Aorta (tissue), 5 donors: ENCODE measurements at regions of chr7 and their contacts with region 1.

Region 1: DNA sequence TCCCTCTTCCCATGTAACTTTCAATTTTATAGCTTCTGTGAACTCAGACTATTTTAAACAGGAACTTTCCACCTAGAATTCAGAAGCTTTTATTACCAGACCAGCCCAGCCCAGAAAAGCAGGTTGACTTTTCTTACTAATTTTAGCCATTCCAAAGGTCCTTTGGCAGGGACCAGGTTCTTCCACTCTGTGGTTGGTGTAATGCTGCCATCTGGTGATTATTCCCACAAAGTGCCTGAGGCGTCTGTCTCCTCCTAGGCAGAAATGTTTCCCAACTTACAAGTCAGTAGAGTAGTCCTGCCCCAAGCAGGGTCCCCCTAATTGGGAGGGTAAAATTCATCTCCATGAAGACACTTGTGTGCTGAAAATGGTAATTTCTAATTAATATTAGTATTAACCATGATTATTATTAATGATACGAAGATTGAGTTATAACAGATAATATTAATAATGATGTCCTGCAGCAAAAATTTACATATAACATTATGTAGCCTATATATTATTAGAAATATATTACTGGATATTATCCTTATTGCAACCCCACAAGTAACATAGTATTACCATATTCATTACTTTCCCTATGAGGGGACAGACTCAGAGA is 53.0 kb upstream of the PPP1R17 start:
- DNase-seq: no peak
- ATAC-seq: peak; percentile 82
- H3K4me3 ChIP-seq: no peak overlapping the region
- H3K27ac ChIP-seq: no peak overlapping the region
- H3K4me1 ChIP-seq: no peaks in the 10 kb centered on the region
- H3K27me3 ChIP-seq: no peaks in the 10 kb centered on the region

Region 2: DNA sequence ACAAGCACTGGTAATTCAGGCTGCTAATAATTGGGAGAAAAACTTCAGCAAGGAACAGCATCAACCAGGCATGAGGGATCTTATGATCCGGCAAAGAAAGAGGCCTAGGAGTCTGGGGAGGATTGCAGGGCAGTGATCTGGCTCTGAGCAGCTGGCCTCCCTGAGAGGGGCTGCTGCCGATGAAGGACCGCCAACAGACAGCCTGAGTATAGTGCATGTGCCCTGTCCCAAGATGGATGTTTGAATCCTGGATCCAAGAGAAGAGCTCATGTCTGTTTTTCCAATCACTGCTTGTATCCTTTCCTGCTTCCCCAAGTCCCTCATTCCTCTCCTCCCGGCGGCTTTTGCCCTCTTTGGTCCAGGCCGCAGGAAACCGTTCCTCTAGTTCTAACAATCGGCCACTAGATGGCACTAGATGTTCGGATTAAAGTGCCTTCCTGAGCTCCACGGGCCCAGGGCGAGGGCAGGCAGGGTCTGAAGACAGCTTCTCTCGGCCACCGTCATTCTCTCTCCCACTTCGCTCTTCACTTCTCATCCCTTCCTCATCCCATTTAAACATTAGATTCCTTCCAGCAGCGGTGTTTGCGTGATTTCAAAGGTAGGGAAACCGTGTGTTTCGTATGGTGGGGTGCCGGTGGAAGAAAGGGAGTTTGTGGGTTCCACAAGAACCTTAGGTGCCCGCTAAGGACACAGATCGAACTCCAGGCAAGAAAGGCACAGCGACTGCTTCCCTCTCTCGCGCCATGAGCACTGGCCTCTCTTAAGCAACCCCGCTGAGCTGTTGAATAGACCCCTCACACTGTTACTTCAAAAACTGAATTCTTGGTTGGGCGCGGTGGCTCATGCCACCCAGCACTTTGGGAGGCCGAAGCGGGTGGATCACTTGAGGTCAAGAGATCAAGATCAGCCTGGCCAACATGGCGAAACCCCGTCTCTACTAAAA is 499.5 kb before region 1 on chr7:
- intact Hi-C with region 1: loop called (anchors 2 to 5 kb)
- DNase-seq: peak; percentile 64 to 85
- ATAC-seq: peak; percentile 85
- H3K4me3 ChIP-seq: no peak overlapping the region
- H3K27ac ChIP-seq: no peak overlapping the region
- H3K4me1 ChIP-seq: no peaks in the 10 kb centered on the region
- H3K27me3 ChIP-seq: no peaks in the 10 kb centered on the region

Region 3: GRCh38 chr7:31373337-31374289 is 260.4 kb before region 1 on chr7:
- intact Hi-C with region 1: loop called in 1 of 2 experiments (anchors 2 kb)
- DNase-seq: no peak
- ATAC-seq: no peak
- H3K4me3 ChIP-seq: no peak overlapping the region
- H3K27ac ChIP-seq: no peak overlapping the region
- H3K4me1 ChIP-seq: no peaks in the 10 kb centered on the region
- H3K27me3 ChIP-seq: no peaks in the 10 kb centered on the region

Region 4: DNA sequence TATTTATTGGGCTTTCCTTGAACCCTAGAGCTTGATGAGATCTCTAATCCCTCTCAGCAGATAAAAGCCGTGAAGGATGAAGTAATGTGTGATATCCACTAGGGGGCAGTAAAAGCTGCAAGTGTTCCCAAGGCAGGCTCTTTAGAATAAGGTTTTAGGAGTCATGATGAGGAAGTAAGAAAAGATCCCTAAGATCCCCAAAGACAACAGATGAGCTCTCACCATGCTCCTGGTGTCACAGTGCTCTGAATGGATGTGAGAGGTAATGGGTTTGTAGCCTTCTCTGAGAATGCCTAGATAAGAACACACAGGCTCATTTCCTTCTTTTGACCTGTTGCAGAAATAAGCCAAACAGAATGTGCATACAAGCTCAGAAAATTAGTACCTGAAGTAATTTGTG is 190.5 kb before region 1 on chr7:
- intact Hi-C with region 1: loop called (anchors 2 to 5 kb)
- DNase-seq: no peak
- ATAC-seq: peak; percentile 70
- H3K4me3 ChIP-seq: no peak overlapping the region
- H3K27ac ChIP-seq: no peak overlapping the region
- H3K4me1 ChIP-seq: no peaks in the 10 kb centered on the region
- H3K27me3 ChIP-seq: no peaks in the 10 kb centered on the region